ENCODE measurements at regions of chr2 and their contacts with region 1.

Region 1: DNA sequence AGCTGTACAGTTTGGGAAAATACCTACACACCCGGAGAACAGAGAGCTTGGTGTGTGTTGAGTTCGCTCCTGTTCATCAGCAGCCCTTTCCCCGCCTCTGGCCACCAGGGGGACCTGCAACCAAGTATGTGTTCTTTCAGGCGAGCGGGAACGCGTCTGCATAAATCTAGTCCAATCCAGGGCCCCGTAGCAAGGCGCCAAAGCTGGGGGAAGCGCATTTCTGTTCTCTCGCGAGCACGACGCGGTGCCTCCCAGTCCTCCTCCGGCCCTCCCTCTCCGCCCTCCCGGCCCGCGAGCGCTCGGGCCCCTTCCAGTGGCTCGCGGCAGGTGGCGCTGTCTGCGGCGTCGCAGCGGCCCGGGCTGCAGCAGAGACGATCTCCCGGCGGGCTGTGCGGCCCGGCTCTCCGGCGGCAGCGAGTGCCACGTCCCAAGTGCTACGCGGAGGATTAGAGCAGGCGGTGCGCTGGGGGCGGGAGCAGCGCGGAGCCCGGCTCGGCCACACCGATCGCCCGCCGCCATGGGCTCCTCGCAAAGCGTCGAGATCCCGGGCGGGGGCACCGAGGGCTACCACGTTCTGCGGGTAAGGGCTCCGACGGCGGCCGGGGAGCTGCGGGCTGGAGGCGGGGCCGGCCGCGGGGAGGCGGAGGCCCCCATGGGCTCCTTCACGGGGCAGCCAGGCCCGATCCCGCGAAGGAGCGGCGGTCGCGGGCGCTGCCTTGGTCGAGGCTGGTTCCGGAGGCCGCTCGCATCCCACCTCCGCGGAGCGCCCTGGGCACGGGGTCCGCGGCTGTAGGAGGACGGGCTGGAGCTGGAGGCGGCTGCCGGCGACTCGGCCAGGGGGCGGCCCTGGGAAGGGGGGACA is at the start of gene GORASP2:
- DNase-seq: peak; percentile 96 to 98
- ATAC-seq: peak; percentile 93 to 94
- H3K4me3 ChIP-seq: peak within 1 kb of the TSS; percentile 77 to 91 (median 84)
- H3K27ac ChIP-seq: peak within 1 kb of the TSS; percentile 86 to 95 (median 92)
- H3K4me1 ChIP-seq: peaks cover 27 to 37% of the 10 kb centered on the region in 2 donors
- H3K27me3 ChIP-seq: no peaks in the 10 kb centered on the region
- CTCF ChIP-seq: peak; percentile 92 to 98 (median 97)
- POLR2A ChIP-seq: peak; percentile 87 to 89
- total RNA-seq, gene GORASP2: 53.9 to 67.0 (median 56.3) TPM

Region 2: DNA sequence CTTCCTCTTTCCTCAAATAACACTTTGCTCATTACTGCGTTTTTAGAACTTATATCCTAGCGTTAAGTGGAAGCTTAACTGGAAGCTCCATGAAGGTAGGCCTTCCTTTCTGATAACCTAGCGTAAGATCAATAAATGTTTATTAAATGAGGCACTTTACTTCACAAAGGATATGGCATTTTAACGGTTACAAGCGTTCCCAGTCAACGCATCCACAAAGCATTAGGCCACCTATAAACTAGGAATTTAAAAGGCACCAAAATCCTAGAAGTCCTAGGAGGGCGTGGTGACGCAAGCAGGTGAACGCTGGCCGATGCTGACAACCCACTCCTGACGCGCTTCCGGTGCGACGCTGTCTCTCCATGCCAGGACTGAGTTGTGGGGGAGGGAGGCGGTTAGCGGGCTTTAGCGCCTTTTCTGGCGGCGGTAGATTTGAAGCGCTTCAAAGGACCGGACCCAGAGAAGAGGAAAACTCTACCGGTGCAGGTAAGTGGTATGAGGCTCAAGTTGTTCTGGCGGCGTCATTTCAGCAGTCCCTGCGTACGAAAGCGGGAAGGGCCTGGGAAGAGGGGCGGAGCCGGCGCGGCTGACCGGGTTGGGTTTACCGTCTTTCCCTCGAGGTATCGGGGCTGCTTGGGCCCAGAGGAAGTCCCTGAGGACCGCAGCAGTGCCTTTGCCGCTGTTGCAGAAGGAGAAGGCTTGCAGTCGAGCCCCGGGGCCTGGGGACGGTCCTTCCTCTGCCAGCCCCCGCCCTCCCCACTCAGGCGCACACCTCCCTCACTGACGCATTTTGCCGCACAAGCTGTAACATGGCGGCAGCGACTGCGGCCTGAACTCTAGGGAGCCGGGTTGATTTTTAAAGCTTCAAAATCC is 1344.8 kb before region 1 on chr2 and contains the start of gene PPIG:
- in situ Hi-C with region 1: loop called in 1 of 4 experiments (anchors 25 kb)
- intact Hi-C with region 1: no loop called
- DNase-seq: peak; percentile 82 to 85
- ATAC-seq: peak; percentile 96 to 97
- H3K4me3 ChIP-seq: peak within 1 kb of the TSS; percentile 87 to 99 (median 96)
- H3K27ac ChIP-seq: peak within 1 kb of the TSS; percentile 96 to 98 (median 97)
- H3K4me1 ChIP-seq: peaks cover 18 to 26% of the 10 kb centered on the region in 2 donors
- H3K27me3 ChIP-seq: no peaks in the 10 kb centered on the region
- CTCF ChIP-seq: no peak
- POLR2A ChIP-seq: peak; percentile 62 to 68
- total RNA-seq, gene PPIG: 27.7 to 40.5 (median 29.3) TPM

Region 3: DNA sequence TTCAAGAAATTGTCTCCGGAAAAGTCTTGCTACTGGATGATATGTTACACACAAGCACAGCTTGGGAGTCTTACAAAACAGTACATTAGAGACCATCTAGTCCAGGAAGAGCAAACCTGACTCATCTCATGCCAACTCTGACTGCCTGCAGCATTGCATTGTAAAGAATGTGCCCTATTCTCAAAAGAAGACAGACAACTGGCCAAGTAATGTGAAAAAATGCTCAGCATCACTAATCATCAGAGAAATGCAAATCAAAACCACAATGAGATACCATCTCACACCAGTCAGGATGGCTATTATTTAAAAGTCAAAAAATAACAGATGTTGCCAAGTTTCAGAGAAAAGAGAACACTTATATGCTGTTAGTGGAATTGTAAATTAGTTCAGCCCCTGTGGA is 42.7 kb before region 1 on chr2:
- in situ Hi-C with region 1: no loop called
- intact Hi-C with region 1: no loop called
- DNase-seq: no peak
- ATAC-seq: no peak
- H3K4me3 ChIP-seq: no peak overlapping the region
- H3K27ac ChIP-seq: no peak overlapping the region
- H3K4me1 ChIP-seq: no peaks in the 10 kb centered on the region
- H3K27me3 ChIP-seq: no peaks in the 10 kb centered on the region
- CTCF ChIP-seq: no peak
- POLR2A ChIP-seq: no peak

Region 4: GRCh38 chr2:170973492-170974303 is 44.6 kb after region 1 on chr2:
- in situ Hi-C with region 1: no loop called
- intact Hi-C with region 1: loop called (anchors 1 kb)
- DNase-seq: peak; percentile 61 to 72
- ATAC-seq: peak; percentile 93
- H3K4me3 ChIP-seq: peak overlapping the region; percentile 65 to 78 (median 74)
- H3K27ac ChIP-seq: peak overlapping the region; percentile 56 to 73 (median 64)
- H3K4me1 ChIP-seq: peaks cover 4 to 5% of the 10 kb centered on the region in 2 donors
- H3K27me3 ChIP-seq: no peaks in the 10 kb centered on the region
- CTCF ChIP-seq: peak; percentile 82 to 98 (median 97)
- POLR2A ChIP-seq: peak; percentile 11 to 13

Region 5: DNA sequence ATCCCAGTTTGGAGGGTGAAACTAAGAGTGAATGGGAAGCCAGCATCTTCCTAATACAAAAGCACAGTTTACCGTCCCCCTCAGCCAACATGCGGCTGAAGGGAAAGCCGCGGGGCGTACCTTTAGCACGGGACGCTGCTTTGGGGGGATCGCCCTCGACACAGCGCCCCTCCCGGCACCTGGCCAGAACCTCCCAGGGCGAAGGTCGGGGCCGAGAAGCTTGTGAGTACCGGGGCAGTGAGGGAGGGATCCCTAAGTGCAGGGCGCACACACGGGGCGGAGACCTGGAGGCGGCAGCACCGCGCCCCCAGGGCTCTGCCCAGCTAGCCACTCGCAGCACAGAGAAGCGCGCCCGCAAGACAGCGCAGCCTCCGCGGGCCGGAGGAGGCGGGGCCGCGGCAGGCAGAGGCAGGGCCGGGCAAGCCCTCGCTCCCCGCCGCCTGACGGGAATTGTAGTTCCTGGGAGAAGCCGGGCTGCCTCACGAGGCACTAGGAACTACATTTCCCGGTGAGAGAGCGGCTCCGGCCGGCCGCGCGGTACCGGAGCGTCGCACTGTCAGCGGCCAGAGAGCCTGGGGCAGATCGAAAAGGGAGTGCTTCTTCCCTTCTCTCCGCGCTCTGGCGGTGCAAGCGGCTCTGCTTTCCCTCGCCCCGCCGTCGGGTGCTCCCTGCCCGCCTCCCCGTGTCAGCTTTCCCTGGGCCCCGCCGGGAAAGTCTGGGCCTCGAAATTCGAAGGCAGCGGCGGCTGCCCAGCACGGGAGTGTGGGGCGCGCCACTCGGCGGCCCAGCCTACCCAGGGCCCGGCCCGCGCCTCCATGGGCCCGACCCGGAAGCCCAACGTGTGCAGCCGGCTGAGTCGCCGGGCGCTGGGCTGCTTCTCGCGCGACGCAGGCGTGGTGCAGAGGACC is 505.0 kb after region 1 on chr2 and contains the starts of genes DCAF17 and METTL8:
- in situ Hi-C with region 1: no loop called
- intact Hi-C with region 1: loop called (anchors 1 kb)
- DNase-seq: peak; percentile 94
- ATAC-seq: peak; percentile 96 to 97
- H3K4me3 ChIP-seq: peak within 1 kb of the TSS; percentile 75 to 96 (median 83)
- H3K27ac ChIP-seq: peak within 1 kb of the TSS; percentile 90 to 99 (median 98)
- H3K4me1 ChIP-seq: peaks cover 12 to 21% of the 10 kb centered on the region in 2 donors
- H3K27me3 ChIP-seq: no peaks in the 10 kb centered on the region
- CTCF ChIP-seq: peak in 3 of 5 experiments; percentile 23 to 43 (median 39)
- POLR2A ChIP-seq: peak; percentile 75 to 77
- total RNA-seq, gene DCAF17: 5.2 to 22.8 (median 8.9) TPM
- total RNA-seq, gene METTL8: 10.3 to 22.0 (median 11.0) TPM

Region 6: DNA sequence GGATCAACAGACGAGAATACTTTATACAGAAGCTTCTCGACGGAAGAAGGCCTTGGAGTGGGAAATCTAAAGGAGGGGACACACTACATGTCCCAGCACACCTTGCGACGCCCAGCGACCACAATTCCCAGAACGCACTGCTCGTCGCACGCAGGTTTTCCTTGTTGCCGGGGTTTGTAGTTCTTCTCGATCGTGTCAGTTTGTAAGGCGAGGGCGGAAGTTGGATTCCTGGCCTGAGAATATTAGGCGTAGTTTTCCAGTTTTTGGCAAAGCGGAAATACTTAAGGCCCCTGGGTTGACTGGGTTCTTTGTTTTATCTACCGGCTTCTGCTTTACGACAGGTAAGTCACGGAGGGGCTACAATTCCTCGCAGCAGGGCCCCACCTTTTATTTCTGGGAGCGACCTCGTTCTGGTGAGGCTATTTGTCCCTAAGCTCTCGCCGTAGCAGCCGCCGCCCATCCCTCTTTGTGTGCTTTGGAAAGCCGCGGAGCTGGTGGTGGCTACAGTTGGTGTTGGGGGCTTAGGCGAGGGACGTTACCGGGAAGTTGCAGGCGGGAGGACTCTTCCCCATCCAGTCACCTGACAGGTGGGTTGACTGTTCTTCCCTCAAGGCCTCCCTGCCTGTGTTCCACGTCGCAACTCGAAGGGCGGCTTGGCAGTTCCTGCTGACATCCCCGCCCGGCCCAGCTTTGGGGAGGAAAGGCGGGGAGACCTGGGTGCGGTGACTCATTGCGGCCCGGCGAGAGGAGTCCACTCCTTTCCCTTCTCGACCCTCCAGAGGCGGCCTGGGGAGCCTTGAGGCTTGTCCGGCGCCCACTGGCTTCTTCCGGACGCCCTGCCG is 758.5 kb after region 1 on chr2 and contains the start of gene DYNC1I2:
- in situ Hi-C with region 1: loop called in 2 of 4 experiments (anchors 25 kb)
- intact Hi-C with region 1: loop called (anchors 5 kb)
- DNase-seq: peak; percentile 87 to 89
- ATAC-seq: peak; percentile 99 to 100
- H3K4me3 ChIP-seq: peak within 1 kb of the TSS; percentile 85 to 95 (median 92)
- H3K27ac ChIP-seq: peak within 1 kb of the TSS; percentile 81 to 93 (median 88)
- H3K4me1 ChIP-seq: peaks cover 13 to 16% of the 10 kb centered on the region in 2 donors
- H3K27me3 ChIP-seq: no peaks in the 10 kb centered on the region
- CTCF ChIP-seq: peak in 1 of 5 experiments; percentile 41
- POLR2A ChIP-seq: peak; percentile 17 to 26
- total RNA-seq, gene DYNC1I2: 40.0 to 93.7 (median 59.3) TPM

Measured in gastrocnemius medialis (tissue), 4 donors.